ENCODE measurements at regions of chr12 and their contacts with region 1.

Region 1: GRCh38 chr12:49707128-49707811 is at the start of gene FMNL3:
- DNase-seq: peak; percentile 99
- CTCF ChIP-seq: peak; percentile 92

Region 2: GRCh38 chr12:49644620-49644994 is 62.7 kb before region 1 on chr12:
- in situ Hi-C with region 1: loop called (anchors 5 kb)
- DNase-seq: peak; percentile 88
- CTCF ChIP-seq: peak; percentile 87

Measured in GM13976 (cell line).